ENCODE measurements at regions of chr1 and their contacts with region 1.

Region 1: DNA sequence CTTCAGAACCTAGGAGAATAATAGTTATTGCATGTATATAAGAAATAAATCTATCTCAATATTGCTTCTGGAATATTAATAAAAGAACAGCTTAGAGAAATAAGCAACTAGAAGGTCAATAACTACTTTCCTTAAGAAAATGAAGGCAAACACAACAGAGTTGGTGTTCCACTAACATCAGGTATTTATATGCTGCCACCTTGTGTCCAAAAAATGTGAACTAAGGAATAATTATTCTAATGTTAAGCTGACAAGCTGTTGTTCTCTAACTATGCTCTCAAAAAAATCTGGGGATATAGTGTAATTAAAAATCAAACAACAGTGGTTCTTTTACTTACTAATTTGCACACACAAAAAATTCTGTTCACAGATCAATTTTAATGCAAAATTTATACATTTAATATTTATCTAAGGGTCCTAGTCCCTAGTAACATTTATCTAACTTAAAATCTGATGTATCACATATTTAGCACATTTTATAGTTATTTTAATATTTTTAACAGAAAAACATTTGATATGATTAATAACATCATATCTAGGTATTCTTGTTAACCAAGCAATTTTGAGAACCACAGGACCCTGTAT is 39.6 kb downstream of the UCHL5 start:
- H3K4me3 ChIP-seq: no peak overlapping the region
- H3K27ac ChIP-seq: no peak overlapping the region
- H3K4me1 ChIP-seq: no peaks in the 10 kb centered on the region
- CTCF ChIP-seq: no peak

Region 2: GRCh38 chr1:192808518-192809306 is 210.8 kb before region 1 on chr1 and contains the start of gene RGS2:
- CTCF ChIA-PET with region 1: interaction called, 56 read pairs
- POLR2A ChIA-PET with region 1: interaction called, 3 read pairs
- H3K4me3 ChIP-seq: peak within 1 kb of the TSS; percentile 86
- H3K27ac ChIP-seq: peak within 1 kb of the TSS; percentile 18; the same call in 1 of the 2 replicates
- H3K4me1 ChIP-seq: 0 out of 2 replicates have a peak, but pooled peaks cover 5% of the 10 kb centered on the region
- CTCF ChIP-seq: peak; percentile 53

Region 3: DNA sequence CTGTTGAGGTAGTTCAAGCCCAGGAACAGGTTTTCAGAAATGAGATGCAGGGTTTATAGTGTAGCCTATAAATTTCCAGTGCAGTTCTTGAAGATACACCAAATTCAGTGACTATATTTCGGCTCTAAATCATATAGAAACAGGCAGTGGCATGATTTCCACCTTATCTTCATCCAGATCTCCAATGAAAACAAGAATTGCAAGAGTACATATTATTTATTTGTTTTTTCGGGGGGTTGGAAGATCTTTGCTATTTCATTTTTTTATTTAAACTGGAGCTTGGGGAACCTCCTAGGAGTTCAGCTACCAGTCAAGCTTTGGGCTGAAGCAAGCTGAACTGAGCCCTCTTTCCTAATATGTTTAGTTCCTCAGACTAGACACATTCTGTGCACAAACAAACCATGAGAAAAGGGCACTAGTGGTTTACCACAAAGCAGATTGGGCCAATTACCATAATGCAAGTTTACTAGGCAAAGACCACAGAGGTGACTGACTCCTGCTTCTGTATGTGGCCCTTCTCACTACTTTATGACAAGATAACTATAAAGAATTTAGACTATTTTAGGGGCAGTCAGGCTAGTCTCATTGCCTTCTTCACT is 142.1 kb before region 1 on chr1:
- CTCF ChIA-PET with region 1: no interaction called
- POLR2A ChIA-PET with region 1: no interaction called
- H3K4me3 ChIP-seq: no peak overlapping the region
- H3K27ac ChIP-seq: no peak overlapping the region
- H3K4me1 ChIP-seq: no peaks in the 10 kb centered on the region
- CTCF ChIP-seq: no peak

Measured in HEK293 (cell line).